Activated CD8-positive, alpha-beta memory T cell treated with anti-CD3 and anti-CD28 coated beads, Interleukin-2, amount 10 ng/mL, durations not matched to agents 7 days and 5 days (primary cell): ENCODE measurements at regions of chr2 and their contacts with region 1.

Region 1: GRCh38 chr2:218395797-218396687 is 3.6 kb upstream of the CTDSP1 start:
- DNase-seq: peak; percentile 97
- ATAC-seq: peak; percentile 66
- H3K4me3 Mint-ChIP-seq: peak overlapping the region; percentile 87
- H3K27ac Mint-ChIP-seq: peak overlapping the region; percentile 94
- H3K4me1 Mint-ChIP-seq: peaks cover 34% of the 10 kb centered on the region
- H3K27me3 Mint-ChIP-seq: no peaks in the 10 kb centered on the region

Region 2: GRCh38 chr2:218152765-218153164 is 243.3 kb before region 1 on chr2:
- CTCF ChIA-PET with region 1: no interaction called
- DNase-seq: no peak
- ATAC-seq: no peak
- H3K4me3 Mint-ChIP-seq: no peak overlapping the region
- H3K27ac Mint-ChIP-seq: no peak overlapping the region
- H3K4me1 Mint-ChIP-seq: peaks cover 10% of the 10 kb centered on the region
- H3K27me3 Mint-ChIP-seq: peaks cover 26% of the 10 kb centered on the region

Region 3: DNA sequence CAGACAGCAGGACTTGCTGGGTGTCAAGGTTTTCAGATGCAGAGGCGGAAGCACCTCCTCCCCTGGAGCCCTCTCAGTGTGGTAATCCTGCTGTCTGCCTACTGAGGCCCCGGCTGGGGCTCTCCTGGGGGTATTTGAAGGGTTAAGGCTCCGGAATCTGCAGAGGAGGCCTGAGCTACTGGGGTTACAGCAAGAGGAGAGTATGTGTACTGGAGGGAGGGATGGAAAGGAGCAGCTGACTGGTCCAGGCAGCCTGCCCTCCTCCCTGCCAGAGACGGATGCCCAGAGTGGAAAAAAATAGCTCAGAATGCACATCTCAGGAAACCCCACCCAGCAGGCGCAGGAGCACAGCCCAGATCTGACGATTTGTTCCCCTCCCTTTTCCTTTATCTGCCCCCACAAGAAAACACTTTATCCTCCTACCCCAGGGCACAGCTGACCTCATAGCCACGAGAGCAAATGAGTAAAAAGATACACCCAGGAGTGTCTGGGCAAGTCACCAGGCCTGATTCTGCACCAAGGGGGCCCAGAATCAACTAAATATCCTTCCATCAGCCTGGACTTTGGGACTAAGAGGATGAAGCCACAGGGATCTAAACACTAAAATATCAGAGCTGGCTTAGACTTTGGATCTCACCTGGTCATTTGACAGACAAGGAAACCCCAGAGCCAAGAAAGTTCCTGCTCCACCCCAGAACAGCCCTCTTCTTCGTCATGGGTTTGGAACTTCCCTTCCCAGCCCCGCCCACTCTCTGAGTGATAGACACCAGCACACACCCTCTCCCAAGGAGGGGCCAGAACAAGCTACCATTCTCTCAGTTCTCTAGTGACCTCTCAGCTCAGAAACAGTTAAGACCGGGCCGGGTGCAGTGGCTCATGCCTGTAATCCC is 109.2 kb before region 1 on chr2:
- CTCF ChIA-PET with region 1: interaction called, 32 read pairs
- DNase-seq: peak; percentile 91
- ATAC-seq: peak; percentile 76
- H3K4me3 Mint-ChIP-seq: peak overlapping the region; percentile 86
- H3K27ac Mint-ChIP-seq: peak overlapping the region; percentile 98
- H3K4me1 Mint-ChIP-seq: peaks cover 77% of the 10 kb centered on the region
- H3K27me3 Mint-ChIP-seq: no peaks in the 10 kb centered on the region

Region 4: GRCh38 chr2:218292048-218293014 is 103.7 kb before region 1 on chr2 and contains the start of gene TMBIM1:
- CTCF ChIA-PET with region 1: interaction called, 32 read pairs
- DNase-seq: peak; percentile 80
- ATAC-seq: peak; percentile 91
- H3K4me3 Mint-ChIP-seq: peak within 1 kb of the TSS; percentile 86
- H3K27ac Mint-ChIP-seq: peak within 1 kb of the TSS; percentile 91
- H3K4me1 Mint-ChIP-seq: peaks cover 61% of the 10 kb centered on the region
- H3K27me3 Mint-ChIP-seq: no peaks in the 10 kb centered on the region
- total RNA-seq, gene TMBIM1: 51.5 to 72.4 TPM

Region 5: DNA sequence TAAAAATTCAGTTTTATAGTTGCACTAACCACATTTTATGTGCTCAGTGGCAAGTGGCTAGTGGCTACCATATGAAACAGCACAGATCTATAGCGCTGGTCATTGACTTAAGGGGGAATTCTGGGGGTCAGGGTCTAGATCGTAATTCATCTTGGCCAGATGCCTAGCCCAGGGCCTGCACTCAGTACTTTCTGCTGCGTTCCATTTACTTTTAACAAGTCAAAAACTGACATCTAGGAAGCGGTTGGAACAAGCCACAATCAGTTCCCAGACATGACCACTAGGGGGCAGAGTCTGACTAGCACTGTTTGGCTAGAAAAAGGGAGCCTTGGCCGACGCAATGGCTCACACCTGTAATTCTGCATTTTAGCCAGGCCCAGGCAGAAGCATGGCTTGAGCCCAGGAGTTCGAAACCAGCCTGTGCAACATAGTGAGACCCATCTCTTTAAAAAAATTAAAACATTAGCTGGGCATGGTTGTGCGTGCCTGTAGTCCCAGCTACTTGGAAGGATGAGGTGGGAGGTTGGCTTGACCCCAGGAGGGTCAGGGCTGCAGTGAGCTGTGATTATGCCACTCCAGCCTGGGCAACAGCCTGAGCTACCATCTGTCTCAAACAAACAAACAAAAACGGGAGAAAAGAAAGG is 94.7 kb before region 1 on chr2:
- CTCF ChIA-PET with region 1: interaction called, 15 read pairs
- DNase-seq: peak; percentile 94
- ATAC-seq: peak; percentile 96
- H3K4me3 Mint-ChIP-seq: no peak overlapping the region
- H3K27ac Mint-ChIP-seq: peak overlapping the region; percentile 76
- H3K4me1 Mint-ChIP-seq: peaks cover 8% of the 10 kb centered on the region
- H3K27me3 Mint-ChIP-seq: no peaks in the 10 kb centered on the region

Region 6: DNA sequence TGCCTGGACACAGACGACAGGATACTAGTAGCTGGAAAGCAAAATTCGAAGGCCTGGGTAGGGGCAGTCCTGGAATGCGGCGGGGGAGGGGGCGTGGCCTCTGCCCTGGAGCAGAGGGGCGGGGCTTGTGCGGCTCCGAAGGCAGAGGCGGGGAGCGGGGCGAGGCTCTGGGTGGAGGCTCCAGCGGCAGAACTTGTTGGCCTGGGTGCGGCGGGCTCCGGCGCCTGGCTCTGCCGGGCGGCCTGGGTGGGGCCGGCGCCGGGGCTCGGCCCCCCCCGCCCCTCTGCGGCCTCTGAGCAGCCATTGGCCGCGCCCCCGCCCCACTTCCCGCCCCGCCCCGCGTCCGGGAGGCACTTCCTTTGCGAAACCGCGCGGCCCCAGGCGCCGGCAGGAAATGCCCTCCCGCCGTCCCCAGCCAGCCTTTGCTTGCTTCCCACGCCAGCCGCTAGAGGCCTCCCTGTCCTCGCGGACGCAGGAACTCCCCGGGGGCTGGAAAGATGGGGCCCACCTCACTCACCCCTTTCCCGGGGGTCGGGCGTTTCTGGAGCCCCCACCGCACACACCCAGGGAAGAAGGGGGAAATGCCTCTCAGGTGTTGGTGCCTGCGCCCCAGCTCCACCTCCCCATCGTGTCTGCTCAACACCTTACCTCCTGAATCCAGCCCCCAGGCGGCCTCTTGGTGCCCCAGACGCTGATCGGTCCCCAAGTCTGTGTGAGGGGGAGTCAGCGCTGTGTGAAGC is 10.3 kb after region 1 on chr2:
- CTCF ChIA-PET with region 1: interaction called, 35 read pairs
- DNase-seq: peak; percentile 97
- ATAC-seq: peak; percentile 91
- H3K4me3 Mint-ChIP-seq: peak overlapping the region; percentile 65
- H3K27ac Mint-ChIP-seq: peak overlapping the region; percentile 89
- H3K4me1 Mint-ChIP-seq: peaks cover 60% of the 10 kb centered on the region
- H3K27me3 Mint-ChIP-seq: no peaks in the 10 kb centered on the region